MCF 10A (cell line): ENCODE measurements at regions of chr17 and their contacts with region 1.

Region 1: DNA sequence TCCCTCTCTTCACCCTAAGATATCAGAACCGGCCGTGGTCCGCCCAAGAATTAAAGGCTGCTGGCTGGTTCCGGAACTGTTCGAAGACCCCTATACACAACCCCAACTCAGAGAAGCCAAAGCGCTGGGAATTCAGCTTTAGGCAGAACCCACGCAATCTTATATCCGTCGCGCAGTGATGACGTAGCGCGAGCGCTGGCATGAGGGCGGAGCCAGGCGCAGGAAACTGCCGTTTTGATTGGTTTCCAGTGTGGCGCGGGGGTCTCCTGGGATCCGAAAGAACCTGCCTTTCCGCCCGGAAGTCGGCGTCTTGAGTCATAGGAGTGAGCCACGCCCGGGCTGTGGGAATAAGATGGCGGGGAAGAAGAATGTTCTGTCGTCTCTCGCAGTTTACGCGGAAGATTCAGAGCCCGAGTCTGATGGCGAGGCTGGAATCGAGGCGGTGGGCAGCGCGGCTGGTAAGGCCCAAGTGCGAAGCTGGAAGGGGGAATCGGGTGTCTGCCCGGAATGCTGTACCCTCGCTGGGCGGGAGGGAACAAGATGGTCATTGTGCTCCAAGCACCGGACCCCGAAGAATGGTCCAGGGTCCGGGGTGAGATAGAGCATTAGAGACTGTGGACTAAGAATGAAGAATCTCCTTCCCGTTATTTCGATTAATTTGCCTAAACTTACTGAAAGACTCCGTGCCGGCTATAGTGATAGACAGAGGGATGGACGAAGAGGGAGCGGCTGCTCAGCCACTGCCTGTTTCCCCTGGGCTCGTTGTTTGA is at the starts of genes RECQL5 and SAP30BP:
- DNase-seq: peak; percentile 99
- H3K4me3 Mint-ChIP-seq: no peak within 1 kb of the TSS
- H3K27ac Mint-ChIP-seq: no peak within 1 kb of the TSS
- H3K4me1 Mint-ChIP-seq: peaks cover 15% of the 10 kb centered on the region
- H3K27me3 Mint-ChIP-seq: no peaks in the 10 kb centered on the region
- CTCF ChIP-seq: no peak
- total RNA-seq, gene RECQL5: 36.3 and 47.9 TPM in 2 replicates
- total RNA-seq, gene SAP30BP: 108 and 123 TPM in 2 replicates

Region 2: GRCh38 chr17:75632863-75633485 is 34.2 kb before region 1 on chr17 and contains the start of gene SMIM5:
- CTCF ChIA-PET with region 1: interaction called, 10 read pairs
- POLR2A ChIA-PET with region 1: interaction called, 15 read pairs
- intact Hi-C with region 1: no loop called
- DNase-seq: peak; percentile 78
- H3K4me3 Mint-ChIP-seq: peak within 1 kb of the TSS; percentile 19
- H3K27ac Mint-ChIP-seq: peak within 1 kb of the TSS; percentile 55
- H3K4me1 Mint-ChIP-seq: peaks cover 10% of the 10 kb centered on the region
- H3K27me3 Mint-ChIP-seq: no peaks in the 10 kb centered on the region
- CTCF ChIP-seq: peak; percentile 90
- total RNA-seq, gene SMIM5: 0.09 TPM in 1 of 2 replicates, not detected in the other

Region 3: DNA sequence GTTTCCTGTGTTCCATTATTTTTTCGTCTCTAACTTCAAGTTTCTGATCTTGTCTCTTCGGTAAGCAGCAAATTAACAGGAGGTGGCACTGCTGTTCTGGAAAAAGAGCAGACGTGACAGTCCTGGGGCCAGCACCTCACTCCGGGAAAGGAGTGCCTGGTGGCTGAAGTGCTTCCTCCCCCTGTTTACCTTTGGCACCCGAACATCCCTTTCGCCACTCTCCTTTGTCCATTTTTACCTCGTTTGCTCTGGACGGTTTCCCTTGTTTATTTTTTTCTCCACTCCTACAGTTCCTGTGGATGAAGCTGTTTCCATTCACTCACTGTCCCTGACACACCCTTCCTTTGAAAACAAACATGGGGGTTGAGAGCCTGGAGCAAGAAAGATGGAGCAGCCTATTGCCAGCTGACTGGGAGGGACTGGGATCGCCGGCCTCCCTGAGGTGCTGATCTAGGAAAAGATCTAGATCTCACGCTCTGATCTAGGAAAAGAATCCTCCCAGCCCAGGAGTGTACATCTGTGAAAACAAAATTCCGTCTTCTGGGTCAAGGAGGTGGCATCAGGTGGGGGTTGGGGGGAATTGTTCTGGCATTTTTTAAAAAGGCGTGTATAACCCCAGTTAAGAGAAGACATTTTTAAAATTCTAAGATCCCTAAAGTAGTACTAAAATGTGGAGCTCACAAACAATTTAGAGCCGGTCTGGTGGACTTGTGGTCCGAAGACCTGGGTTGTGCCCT is 12.7 kb after region 1 on chr17:
- CTCF ChIA-PET with region 1: interaction called, 6 read pairs
- POLR2A ChIA-PET with region 1: interaction called, 48 read pairs
- intact Hi-C with region 1: no loop called
- DNase-seq: peak; percentile 92
- H3K4me3 Mint-ChIP-seq: peak overlapping the region; percentile 60
- H3K27ac Mint-ChIP-seq: peak overlapping the region; percentile 91
- H3K4me1 Mint-ChIP-seq: peaks cover 40% of the 10 kb centered on the region
- H3K27me3 Mint-ChIP-seq: no peaks in the 10 kb centered on the region
- CTCF ChIP-seq: peak; percentile 60

Region 4: DNA sequence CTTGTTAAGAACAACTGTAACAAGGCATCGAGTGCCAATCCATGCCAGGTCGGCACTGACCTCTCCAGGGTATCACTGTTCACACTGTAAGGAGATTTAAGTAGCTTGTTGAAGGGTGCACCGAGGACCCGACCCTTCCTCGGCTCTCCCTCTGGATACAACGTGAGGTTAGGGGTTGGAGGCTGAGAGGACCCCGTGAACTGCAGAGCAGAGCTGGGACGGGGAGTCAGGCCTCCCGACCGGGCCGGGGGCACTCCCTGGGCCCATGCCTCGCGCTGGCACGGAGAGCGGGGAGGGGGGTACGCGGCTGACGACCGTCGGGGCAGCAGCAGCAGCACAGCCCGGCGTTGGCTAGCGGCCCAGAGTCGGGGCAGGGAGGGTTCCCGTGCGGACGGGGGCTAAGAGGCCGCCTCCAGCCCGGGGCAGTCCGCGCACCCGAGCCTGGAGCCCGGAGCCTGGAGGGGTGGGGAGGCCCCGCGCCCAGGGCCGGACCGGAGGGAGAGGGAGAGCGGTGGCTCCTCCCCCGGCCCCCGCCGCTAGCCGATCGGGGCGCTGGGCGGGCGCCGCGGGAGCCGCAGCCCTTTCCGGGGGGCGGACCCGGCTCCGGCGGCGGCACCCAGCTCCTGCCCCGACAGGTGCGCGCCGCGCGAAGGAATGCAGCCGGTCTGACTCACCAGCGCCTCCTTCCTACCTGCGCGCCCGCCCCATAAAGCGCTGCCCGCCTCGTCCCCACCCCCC is 53.7 kb after region 1 on chr17 and contains the start of gene ITGB4:
- CTCF ChIA-PET with region 1: interaction called, 4 read pairs
- POLR2A ChIA-PET with region 1: interaction called, 748 read pairs
- intact Hi-C with region 1: no loop called
- DNase-seq: peak; percentile 85
- H3K4me3 Mint-ChIP-seq: peak within 1 kb of the TSS; percentile 87
- H3K27ac Mint-ChIP-seq: peak within 1 kb of the TSS; percentile 78
- H3K4me1 Mint-ChIP-seq: peaks cover 6% of the 10 kb centered on the region
- H3K27me3 Mint-ChIP-seq: no peaks in the 10 kb centered on the region
- CTCF ChIP-seq: no peak
- total RNA-seq, gene ITGB4: 727 and 1,054 TPM in 2 replicates

Region 5: DNA sequence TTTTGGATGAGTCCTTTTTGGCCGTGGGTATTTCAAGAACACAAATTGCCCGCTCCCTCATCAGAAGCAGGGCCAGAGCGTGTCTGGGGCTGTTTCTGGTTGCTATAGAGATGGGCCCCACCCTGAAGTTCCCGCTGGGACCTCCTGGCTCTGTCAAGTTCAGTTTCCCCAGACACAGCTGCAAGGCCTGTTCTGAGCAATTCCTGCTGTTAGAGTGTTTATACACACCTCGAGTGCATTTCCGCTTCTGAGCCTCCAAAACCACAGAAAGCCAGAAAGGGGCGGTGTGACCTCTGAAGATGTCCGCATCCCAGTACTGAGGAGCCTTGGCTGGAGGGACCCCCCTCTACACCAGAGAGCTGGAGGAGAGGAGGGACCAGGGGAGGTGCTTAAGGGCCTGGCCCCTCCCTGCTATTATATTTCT is 197.3 kb after region 1 on chr17:
- CTCF ChIA-PET with region 1: no interaction called
- POLR2A ChIA-PET with region 1: no interaction called
- intact Hi-C with region 1: no loop called
- DNase-seq: no peak
- H3K4me3 Mint-ChIP-seq: no peak overlapping the region
- H3K27ac Mint-ChIP-seq: no peak overlapping the region
- H3K4me1 Mint-ChIP-seq: peaks cover 8% of the 10 kb centered on the region
- H3K27me3 Mint-ChIP-seq: no peaks in the 10 kb centered on the region
- CTCF ChIP-seq: no peak